Activated CD4-positive, alpha-beta T cell treated with anti-CD3 and anti-CD28 coated beads, Interleukin-2, amount 10 ng/mL, durations not matched to agents 24 days and 14 days (primary cell): ENCODE measurements at regions of chr16 and their contacts with region 1.

Region 1: DNA sequence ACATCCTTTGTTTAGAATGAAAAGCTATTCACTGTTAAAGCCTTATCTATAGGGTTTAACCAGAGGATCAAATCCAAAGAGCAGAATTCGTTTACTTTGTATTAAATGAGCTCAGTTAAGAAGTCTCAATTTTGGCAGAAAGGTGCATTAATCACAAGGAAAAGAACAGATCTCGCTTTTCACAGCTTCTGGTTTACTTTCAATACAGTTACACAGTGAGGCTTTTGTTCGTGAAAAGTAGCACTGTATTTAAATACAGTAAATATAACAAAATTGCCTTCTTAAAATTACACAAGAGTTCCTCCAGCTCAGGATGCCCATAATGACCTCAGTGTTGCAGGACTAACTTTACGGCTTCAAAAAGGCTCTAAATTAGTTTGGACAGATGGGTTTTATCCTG is 669.1 kb upstream of the SALL1 start:
- DNase-seq: no peak
- H3K4me3 Mint-ChIP-seq: no peak overlapping the region
- H3K27ac Mint-ChIP-seq: no peak overlapping the region
- H3K4me1 Mint-ChIP-seq: no peaks in the 10 kb centered on the region
- H3K27me3 Mint-ChIP-seq: no peaks in the 10 kb centered on the region

Region 2: GRCh38 chr16:51982715-51983680 is 162.8 kb after region 1 on chr16:
- intact Hi-C with region 1: loop called (anchors 10 kb)
- DNase-seq: peak; percentile 75
- H3K4me3 Mint-ChIP-seq: no peak overlapping the region
- H3K27ac Mint-ChIP-seq: no peak overlapping the region
- H3K4me1 Mint-ChIP-seq: no peaks in the 10 kb centered on the region
- H3K27me3 Mint-ChIP-seq: no peaks in the 10 kb centered on the region